Common myeloid progenitor, CD34-positive (primary cell): ENCODE measurements at regions of chr12 and their contacts with region 1.

Region 1: GRCh38 chr12:25151476-25151875 is 43.5 kb downstream of the DNAI7 start:
- DNase-seq: peak in 1 of 3 donors; percentile 12
- H3K4me3 ChIP-seq: no peak overlapping the region
- H3K27ac ChIP-seq: no peak overlapping the region
- H3K4me1 ChIP-seq: peaks cover 0 to 4% (median 0%) of the 10 kb centered on the region in 4 experiments
- H3K27me3 ChIP-seq: no peaks in the 10 kb centered on the region

Region 2: GRCh38 chr12:24922090-24922489 is 229.4 kb before region 1 on chr12:
- CTCF ChIA-PET with region 1: no interaction called
- POLR2A ChIA-PET with region 1: no interaction called
- DNase-seq: no peak
- H3K4me3 ChIP-seq: no peak overlapping the region
- H3K27ac ChIP-seq: no peak overlapping the region
- H3K4me1 ChIP-seq: peaks cover 0 to 9% (median 0%) of the 10 kb centered on the region in 4 experiments
- H3K27me3 ChIP-seq: no peaks in the 10 kb centered on the region

Region 3: GRCh38 chr12:25052196-25052913 is 99.1 kb before region 1 on chr12:
- CTCF ChIA-PET with region 1: no interaction called
- POLR2A ChIA-PET with region 1: no interaction called
- DNase-seq: peak; percentile 93 to 98 (median 96)
- H3K4me3 ChIP-seq: peak overlapping the region in 6 of 7 experiments; percentile 79 to 99 (median 88)
- H3K27ac ChIP-seq: peak overlapping the region; percentile 78 to 93
- H3K4me1 ChIP-seq: peaks cover 31 to 51% (median 41%) of the 10 kb centered on the region in 4 experiments
- H3K27me3 ChIP-seq: no peaks in the 10 kb centered on the region

Region 4: DNA sequence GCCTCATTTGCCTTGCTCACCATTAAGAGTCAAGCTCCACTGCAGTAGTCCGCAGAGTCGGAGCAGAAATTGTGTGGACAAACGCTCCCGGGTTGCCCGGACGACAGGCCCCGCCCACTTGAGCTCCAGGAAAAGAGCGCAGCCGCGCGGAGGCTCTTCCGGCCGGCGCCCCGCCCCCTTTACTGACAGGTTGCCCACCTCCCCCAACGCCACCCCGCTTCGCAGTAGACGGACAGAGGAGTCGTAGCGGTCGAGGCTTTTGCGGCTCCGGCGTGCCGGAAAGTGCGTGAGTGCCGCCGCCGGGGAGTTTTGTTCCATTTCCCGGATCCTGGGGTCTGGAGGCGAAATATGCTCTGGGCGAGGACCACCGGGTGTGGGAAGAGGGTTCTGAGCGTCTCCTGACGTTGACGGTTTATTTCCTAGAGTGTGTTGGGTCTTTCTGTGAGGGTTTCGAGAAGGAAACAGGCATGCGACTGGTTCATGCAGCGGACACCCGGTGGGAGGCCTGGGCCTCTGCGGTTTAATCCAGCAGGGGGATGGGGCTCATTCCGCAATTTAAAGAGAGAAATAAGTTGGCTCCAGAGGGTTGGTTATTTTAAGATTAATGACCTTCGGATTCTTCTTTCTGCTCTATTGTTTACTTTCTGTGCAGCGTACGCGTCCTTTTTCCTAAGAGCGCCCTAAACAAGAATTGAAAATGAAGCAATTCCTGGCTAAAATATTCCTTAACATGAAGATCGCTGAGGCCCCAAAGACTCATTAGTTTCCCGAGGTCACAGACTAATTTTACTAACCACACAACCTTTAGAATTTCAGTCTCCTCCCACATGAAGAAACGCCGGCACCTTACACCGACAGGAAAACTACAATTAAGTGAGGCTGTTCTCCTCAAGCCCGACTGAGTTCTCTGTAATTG is 43.8 kb after region 1 on chr12 and contains the starts of genes DNAI7 and ETFRF1:
- CTCF ChIA-PET with region 1: interaction called, 12 read pairs
- POLR2A ChIA-PET with region 1: interaction called, 3 read pairs
- DNase-seq: peak; percentile 97 to 99 (median 98)
- H3K4me3 ChIP-seq: peak within 1 kb of the TSS; percentile 80 to 97 (median 92)
- H3K27ac ChIP-seq: peak within 1 kb of the TSS; percentile 97
- H3K4me1 ChIP-seq: peaks cover 21 to 33% (median 26%) of the 10 kb centered on the region in 4 experiments
- H3K27me3 ChIP-seq: no peaks in the 10 kb centered on the region